HEK293 (cell line): ENCODE measurements at regions of chr1 and their contacts with region 1.

Region 1: DNA sequence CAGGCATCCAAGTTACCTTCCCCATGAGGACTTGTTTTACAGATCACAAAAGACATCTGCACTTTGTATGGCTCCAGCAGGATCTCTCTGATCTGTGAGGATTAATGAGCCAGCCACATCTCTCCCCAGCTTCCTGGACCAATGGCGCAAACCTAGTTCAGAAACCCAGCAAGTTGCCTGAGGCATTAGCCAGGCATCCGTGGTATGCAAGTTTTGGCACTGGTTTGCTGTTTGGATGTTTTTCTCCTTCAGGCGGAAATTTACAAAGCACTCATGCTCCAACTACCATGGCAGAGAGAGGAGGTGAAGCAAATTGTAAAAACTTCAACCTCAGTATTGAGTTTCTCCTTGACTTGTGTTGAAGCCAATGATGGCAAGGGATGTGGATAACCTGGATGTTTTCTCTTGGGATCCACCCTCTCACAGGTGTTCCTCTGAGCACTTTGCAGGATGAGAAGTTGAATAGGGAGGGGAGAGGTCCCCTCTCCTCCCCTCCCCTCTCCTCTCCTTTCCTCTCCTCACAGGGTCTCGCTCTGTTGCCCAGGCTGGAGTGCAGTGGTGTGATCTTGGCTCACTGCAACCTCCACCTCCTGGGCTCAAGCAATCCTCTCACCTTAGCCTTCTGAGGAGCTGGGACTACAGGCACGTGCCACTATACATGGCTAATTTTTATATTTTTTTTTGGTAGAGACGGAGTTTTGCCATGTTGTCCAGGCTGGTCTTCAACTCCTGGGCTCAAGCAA is 25.6 kb upstream of the ENO1 start:
- H3K4me3 ChIP-seq: no peak overlapping the region
- H3K27ac ChIP-seq: no peak overlapping the region
- H3K4me1 ChIP-seq: no peaks in the 10 kb centered on the region
- CTCF ChIP-seq: no peak

Region 2: GRCh38 chr1:8809342-8809736 is 94.7 kb before region 1 on chr1:
- CTCF ChIA-PET with region 1: no interaction called
- POLR2A ChIA-PET with region 1: no interaction called
- H3K4me3 ChIP-seq: no peak overlapping the region
- H3K27ac ChIP-seq: no peak overlapping the region
- H3K4me1 ChIP-seq: peaks cover 4% of the 10 kb centered on the region
- CTCF ChIP-seq: no peak

Region 3: DNA sequence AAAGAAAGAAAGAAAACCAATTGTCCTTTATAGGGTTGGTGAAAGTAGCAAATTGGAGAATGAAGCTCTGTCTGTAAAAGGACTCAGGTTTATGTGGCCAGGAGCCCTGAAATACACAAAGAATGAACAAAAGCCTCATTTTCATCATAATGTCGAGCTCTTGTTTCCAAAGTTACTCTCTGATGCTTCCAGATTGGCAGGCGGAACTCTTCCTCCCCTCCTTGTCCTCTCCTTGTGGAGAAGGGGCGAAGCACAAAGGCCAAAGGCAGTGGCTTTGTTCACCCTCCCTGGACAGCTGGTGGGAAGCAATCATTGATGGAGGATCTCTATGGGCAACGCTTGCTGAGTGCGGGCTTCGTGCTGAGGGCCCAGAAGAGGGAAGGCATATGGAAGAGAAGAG is 47.2 kb after region 1 on chr1:
- CTCF ChIA-PET with region 1: no interaction called
- POLR2A ChIA-PET with region 1: interaction called, 13 read pairs
- H3K4me3 ChIP-seq: no peak overlapping the region
- H3K27ac ChIP-seq: no peak overlapping the region
- H3K4me1 ChIP-seq: no peaks in the 10 kb centered on the region
- CTCF ChIP-seq: no peak